ENCODE measurements at regions of chr2 and their contacts with region 1.

Region 1: DNA sequence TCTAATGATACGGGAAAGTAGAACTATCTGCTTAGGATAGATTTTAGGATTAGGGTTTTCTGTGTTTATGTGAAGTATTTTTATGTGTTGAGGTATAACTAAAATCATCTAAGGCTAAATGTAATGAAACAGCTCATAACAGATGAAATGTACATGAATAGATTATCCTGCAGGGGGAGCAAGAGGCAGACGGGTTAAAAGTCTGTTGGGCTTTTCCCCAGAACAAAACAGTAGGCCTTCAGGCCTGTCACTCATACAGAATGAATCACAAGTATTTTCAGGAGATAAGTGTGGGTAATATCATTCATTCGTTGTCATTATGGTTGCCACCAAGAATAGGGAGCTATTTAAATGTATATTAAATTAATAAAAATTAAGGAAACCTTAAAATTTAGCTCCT is 107.9 kb upstream of the IL1R2 start:
- DNase-seq: peak; percentile 54
- H3K4me3 ChIP-seq: no peak overlapping the region
- H3K27ac ChIP-seq: no peak overlapping the region
- H3K4me1 ChIP-seq: peaks cover 22% of the 10 kb centered on the region
- H3K27me3 ChIP-seq: no peaks in the 10 kb centered on the region
- CTCF ChIP-seq: peak; percentile 33 to 53
- POLR2A ChIP-seq: no peak

Region 2: GRCh38 chr2:101697124-101698013 is 186.5 kb before region 1 on chr2 and contains the start of gene MAP4K4:
- CTCF ChIA-PET with region 1: no interaction called
- POLR2A ChIA-PET with region 1: no interaction called
- dilution Hi-C with region 1: no loop called
- intact Hi-C with region 1: loop called (anchors 2 kb)
- DNase-seq: peak; percentile 67
- H3K4me3 ChIP-seq: peak within 1 kb of the TSS; percentile 55 to 98 (median 96)
- H3K27ac ChIP-seq: peak within 1 kb of the TSS; percentile 85
- H3K4me1 ChIP-seq: peaks cover 20% of the 10 kb centered on the region
- H3K27me3 ChIP-seq: no peaks in the 10 kb centered on the region
- CTCF ChIP-seq: peak in 1 of 2 donors; percentile 11
- POLR2A ChIP-seq: peak; percentile 88
- total RNA-seq, gene MAP4K4: 251 and 269 TPM in 2 replicates

Region 3: GRCh38 chr2:101751875-101752619 is 131.8 kb before region 1 on chr2:
- CTCF ChIA-PET with region 1: no interaction called
- POLR2A ChIA-PET with region 1: no interaction called
- dilution Hi-C with region 1: no loop called
- intact Hi-C with region 1: no loop called
- DNase-seq: no peak
- H3K4me3 ChIP-seq: no peak overlapping the region
- H3K27ac ChIP-seq: no peak overlapping the region
- H3K4me1 ChIP-seq: peaks cover 39% of the 10 kb centered on the region
- H3K27me3 ChIP-seq: no peaks in the 10 kb centered on the region
- CTCF ChIP-seq: no peak
- POLR2A ChIP-seq: no peak

Region 4: DNA sequence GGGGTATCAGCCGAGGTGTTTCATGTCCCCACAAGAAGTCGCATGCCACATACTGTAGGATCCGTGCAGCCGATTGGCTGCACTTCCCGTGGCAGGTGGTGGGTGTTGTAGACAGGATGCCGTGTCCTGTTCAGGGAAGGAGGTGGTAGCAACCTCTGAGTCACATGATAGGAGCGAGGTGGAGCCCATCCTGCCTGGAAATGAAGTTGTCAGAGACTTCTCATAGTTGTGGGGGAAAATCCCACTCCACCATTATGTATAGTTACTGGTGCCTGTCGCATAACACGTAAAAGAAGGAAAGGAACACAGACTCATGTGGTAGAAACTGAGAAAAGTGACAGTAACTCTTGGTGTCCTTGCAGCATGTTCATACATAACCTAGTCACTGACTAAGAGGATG is 16.5 kb after region 1 on chr2:
- CTCF ChIA-PET with region 1: interaction called, 14 read pairs
- POLR2A ChIA-PET with region 1: no interaction called
- dilution Hi-C with region 1: no loop called
- intact Hi-C with region 1: no loop called
- DNase-seq: peak; percentile 29
- H3K4me3 ChIP-seq: no peak overlapping the region
- H3K27ac ChIP-seq: no peak overlapping the region
- H3K4me1 ChIP-seq: no peaks in the 10 kb centered on the region
- H3K27me3 ChIP-seq: no peaks in the 10 kb centered on the region
- CTCF ChIP-seq: no peak
- POLR2A ChIP-seq: no peak

Region 5: GRCh38 chr2:101921319-101921952 is 37.6 kb after region 1 on chr2:
- CTCF ChIA-PET with region 1: no interaction called
- POLR2A ChIA-PET with region 1: no interaction called
- dilution Hi-C with region 1: no loop called
- intact Hi-C with region 1: no loop called
- DNase-seq: no peak
- H3K4me3 ChIP-seq: no peak overlapping the region
- H3K27ac ChIP-seq: no peak overlapping the region
- H3K4me1 ChIP-seq: no peaks in the 10 kb centered on the region
- H3K27me3 ChIP-seq: peaks cover 5 to 17% of the 10 kb centered on the region in 2 experiments
- CTCF ChIP-seq: no peak
- POLR2A ChIP-seq: no peak

Region 6: GRCh38 chr2:102258386-102259074 is 374.7 kb after region 1 on chr2:
- CTCF ChIA-PET with region 1: no interaction called
- POLR2A ChIA-PET with region 1: interaction called, 11 read pairs
- dilution Hi-C with region 1: no loop called
- intact Hi-C with region 1: no loop called
- DNase-seq: peak; percentile 78
- H3K4me3 ChIP-seq: no peak overlapping the region
- H3K27ac ChIP-seq: peak overlapping the region; percentile 35
- H3K4me1 ChIP-seq: peaks cover 15% of the 10 kb centered on the region
- H3K27me3 ChIP-seq: no peaks in the 10 kb centered on the region
- CTCF ChIP-seq: no peak
- POLR2A ChIP-seq: no peak

Region 7: GRCh38 chr2:102449370-102449974 is 565.6 kb after region 1 on chr2:
- CTCF ChIA-PET with region 1: interaction called, 13 read pairs
- POLR2A ChIA-PET with region 1: no interaction called
- dilution Hi-C with region 1: no loop called
- intact Hi-C with region 1: loop called (anchors 2 kb)
- DNase-seq: peak; percentile 67
- H3K4me3 ChIP-seq: no peak overlapping the region
- H3K27ac ChIP-seq: no peak overlapping the region
- H3K4me1 ChIP-seq: no peaks in the 10 kb centered on the region
- H3K27me3 ChIP-seq: peaks cover 0 to 5% of the 10 kb centered on the region in 2 experiments
- CTCF ChIP-seq: peak; percentile 53 to 58
- POLR2A ChIP-seq: no peak

Region 8: DNA sequence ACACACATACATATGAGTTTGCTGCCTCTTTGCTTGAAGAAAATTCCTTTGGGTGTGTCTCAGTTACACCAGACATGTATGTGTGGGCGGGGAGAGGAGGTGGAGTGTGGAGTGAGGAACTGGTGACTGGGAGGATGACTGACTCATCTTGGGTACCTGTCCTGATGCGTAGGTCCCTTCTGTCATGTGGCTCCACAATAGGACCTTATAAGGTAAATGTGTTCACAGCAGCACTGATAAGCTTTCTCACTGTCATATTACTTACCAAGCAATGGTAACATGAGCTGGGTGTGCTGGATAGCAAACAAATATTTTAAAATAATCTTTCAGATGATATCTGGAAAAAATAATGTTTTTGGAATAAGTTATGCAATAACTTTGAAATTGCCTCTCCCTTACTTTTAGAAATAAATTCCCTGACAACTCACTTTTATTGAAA is 780.6 kb after region 1 on chr2:
- CTCF ChIA-PET with region 1: no interaction called
- POLR2A ChIA-PET with region 1: no interaction called
- dilution Hi-C with region 1: no loop called
- intact Hi-C with region 1: no loop called
- DNase-seq: no peak
- H3K4me3 ChIP-seq: no peak overlapping the region
- H3K27ac ChIP-seq: no peak overlapping the region
- H3K4me1 ChIP-seq: no peaks in the 10 kb centered on the region
- H3K27me3 ChIP-seq: peaks cover 0 to 1% of the 10 kb centered on the region in 2 experiments
- CTCF ChIP-seq: no peak
- POLR2A ChIP-seq: no peak

Measured in endothelial cell of umbilical vein (primary cell).